Stomach (tissue), 19 donors: ENCODE measurements at regions of chr11 and their contacts with region 1.

Region 1: DNA sequence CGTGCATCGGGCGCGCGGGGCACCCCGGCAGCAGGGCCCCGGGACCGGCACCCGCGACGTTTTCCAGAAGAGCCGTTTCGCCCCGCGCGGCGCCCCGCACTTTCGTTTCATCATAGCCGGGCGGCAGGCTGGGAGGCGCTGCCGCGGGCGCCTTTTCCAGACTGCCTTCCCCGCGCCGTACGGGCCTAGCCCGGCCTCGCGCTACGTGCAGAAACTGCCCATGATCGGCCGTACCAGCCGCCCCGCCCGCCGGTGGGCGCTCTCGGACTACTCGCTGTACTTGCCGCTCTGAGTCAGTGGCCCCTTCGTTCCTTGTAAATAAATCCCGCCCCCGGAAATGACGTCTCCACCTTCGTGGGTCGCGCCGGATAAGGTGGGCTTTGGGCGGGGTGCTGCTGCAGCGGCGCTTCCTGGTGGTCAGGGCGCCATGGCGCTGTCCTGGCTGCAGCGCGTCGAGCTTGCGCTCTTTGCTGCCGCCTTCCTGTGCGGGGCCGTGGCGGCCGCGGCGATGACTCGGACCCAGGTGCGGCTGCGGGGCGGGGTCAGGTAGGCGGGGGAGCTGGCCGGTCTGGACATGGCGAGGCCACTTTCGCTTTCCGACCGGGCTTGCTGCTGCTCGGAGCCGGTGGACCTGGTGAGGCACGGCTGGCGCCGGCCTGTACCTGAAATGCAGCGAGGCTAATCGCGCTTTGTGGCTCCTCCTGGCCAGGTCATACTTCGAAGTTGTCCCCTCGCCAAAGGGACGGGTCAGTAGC is at the start of gene TMEM179B:
- DNase-seq: peak; percentile 99 to 100
- H3K4me3 ChIP-seq: peak within 1 kb of the TSS; percentile 62 to 100 (median 82)
- H3K27ac ChIP-seq: peak within 1 kb of the TSS; percentile 92 to 99 (median 94)
- H3K4me1 ChIP-seq: peaks cover 41 to 61% (median 54%) of the 10 kb centered on the region in 4 donors
- H3K27me3 ChIP-seq: no peaks in the 10 kb centered on the region
- CTCF ChIP-seq: peak in 2 of 7 experiments; percentile 30 to 43
- EP300 ChIP-seq: no peak
- POLR2A ChIP-seq: peak in 2 of 4 donors; percentile 87 to 96
- total RNA-seq, gene TMEM179B: 26.1 to 135 (median 85.5) TPM in 4 of 5 donors, not detected in the other

Region 2: GRCh38 chr11:62831520-62832335 is 44.5 kb after region 1 on chr11 and contains the start of gene STX5:
- intact Hi-C with region 1: loop called (anchors 10 kb)
- DNase-seq: peak; percentile 100
- H3K4me3 ChIP-seq: peak within 1 kb of the TSS; percentile 67 to 91 (median 84)
- H3K27ac ChIP-seq: peak within 1 kb of the TSS; percentile 95 to 99 (median 98)
- H3K4me1 ChIP-seq: peaks cover 30 to 67% (median 52%) of the 10 kb centered on the region in 4 donors
- H3K27me3 ChIP-seq: no peaks in the 10 kb centered on the region
- CTCF ChIP-seq: no peak
- EP300 ChIP-seq: no peak
- POLR2A ChIP-seq: peak in 2 of 4 donors; percentile 75 to 80
- total RNA-seq, gene STX5: 8.2 to 48.1 (median 24.2) TPM

Region 3: GRCh38 chr11:62855571-62856332 is 68.6 kb after region 1 on chr11:
- intact Hi-C with region 1: loop called (anchors 10 kb)
- DNase-seq: peak; percentile 97 to 99
- H3K4me3 ChIP-seq: peak overlapping the region; percentile 59 to 99 (median 82)
- H3K27ac ChIP-seq: peak overlapping the region; percentile 78 to 89 (median 79)
- H3K4me1 ChIP-seq: peaks cover 29 to 66% (median 42%) of the 10 kb centered on the region in 4 donors
- H3K27me3 ChIP-seq: no peaks in the 10 kb centered on the region
- CTCF ChIP-seq: no peak
- EP300 ChIP-seq: no peak
- POLR2A ChIP-seq: peak in 2 of 4 donors; percentile 79 to 96